ENCODE measurements at regions of chr6 and their contacts with region 1.

Region 1: GRCh38 chr6:3162565-3163247 is 5.4 kb upstream of the TUBB2A start:
- DNase-seq: peak; percentile 83
- H3K4me3 ChIP-seq: peak overlapping the region; percentile 61 to 65
- H3K27ac ChIP-seq: peak overlapping the region; percentile 27 to 84
- H3K4me1 ChIP-seq: no peaks in the 10 kb centered on the region
- H3K27me3 ChIP-seq: no peaks in the 10 kb centered on the region
- CTCF ChIP-seq: no peak
- POLR2A ChIP-seq: no peak

Region 2: GRCh38 chr6:3258720-3259490 is 96.2 kb after region 1 on chr6 and contains the start of gene PSMG4:
- intact Hi-C with region 1: loop called (anchors 10 kb)
- DNase-seq: peak; percentile 96
- H3K4me3 ChIP-seq: peak within 1 kb of the TSS; percentile 93 to 97
- H3K27ac ChIP-seq: peak within 1 kb of the TSS; percentile 71 to 77
- H3K4me1 ChIP-seq: peaks cover 27% of the 10 kb centered on the region
- H3K27me3 ChIP-seq: no peaks in the 10 kb centered on the region
- CTCF ChIP-seq: no peak
- POLR2A ChIP-seq: no peak
- total RNA-seq, gene PSMG4: 42.4 to 46.1 TPM

Measured in testis (tissue), 5 donors.